ENCODE measurements at regions of chr11 and their contacts with region 1.

Region 1: DNA sequence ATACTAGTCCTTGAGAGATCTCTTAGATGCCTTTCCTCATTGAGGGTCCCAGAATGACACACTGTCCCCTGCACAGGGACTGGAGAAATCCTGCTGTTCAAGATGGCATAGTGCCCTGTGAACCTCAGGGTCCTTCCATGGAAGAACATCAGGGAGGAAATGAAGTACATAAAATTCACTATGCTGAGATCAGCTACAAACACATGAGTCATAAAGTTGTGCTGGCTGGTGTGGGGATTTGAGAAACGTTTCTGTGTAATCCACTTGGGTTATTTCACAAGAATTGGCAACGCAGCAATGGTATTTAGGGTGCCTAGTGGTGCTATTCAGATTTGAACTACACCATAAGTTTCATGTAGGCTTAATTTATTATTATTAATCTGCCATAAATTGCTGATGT is 174.4 kb downstream of the MAML2 start:
- DNase-seq: no peak
- H3K4me3 Mint-ChIP-seq: no peak overlapping the region
- H3K27ac Mint-ChIP-seq: peak overlapping the region; percentile 81
- H3K4me1 Mint-ChIP-seq: peaks cover 50% of the 10 kb centered on the region
- H3K27me3 Mint-ChIP-seq: no peaks in the 10 kb centered on the region

Region 2: DNA sequence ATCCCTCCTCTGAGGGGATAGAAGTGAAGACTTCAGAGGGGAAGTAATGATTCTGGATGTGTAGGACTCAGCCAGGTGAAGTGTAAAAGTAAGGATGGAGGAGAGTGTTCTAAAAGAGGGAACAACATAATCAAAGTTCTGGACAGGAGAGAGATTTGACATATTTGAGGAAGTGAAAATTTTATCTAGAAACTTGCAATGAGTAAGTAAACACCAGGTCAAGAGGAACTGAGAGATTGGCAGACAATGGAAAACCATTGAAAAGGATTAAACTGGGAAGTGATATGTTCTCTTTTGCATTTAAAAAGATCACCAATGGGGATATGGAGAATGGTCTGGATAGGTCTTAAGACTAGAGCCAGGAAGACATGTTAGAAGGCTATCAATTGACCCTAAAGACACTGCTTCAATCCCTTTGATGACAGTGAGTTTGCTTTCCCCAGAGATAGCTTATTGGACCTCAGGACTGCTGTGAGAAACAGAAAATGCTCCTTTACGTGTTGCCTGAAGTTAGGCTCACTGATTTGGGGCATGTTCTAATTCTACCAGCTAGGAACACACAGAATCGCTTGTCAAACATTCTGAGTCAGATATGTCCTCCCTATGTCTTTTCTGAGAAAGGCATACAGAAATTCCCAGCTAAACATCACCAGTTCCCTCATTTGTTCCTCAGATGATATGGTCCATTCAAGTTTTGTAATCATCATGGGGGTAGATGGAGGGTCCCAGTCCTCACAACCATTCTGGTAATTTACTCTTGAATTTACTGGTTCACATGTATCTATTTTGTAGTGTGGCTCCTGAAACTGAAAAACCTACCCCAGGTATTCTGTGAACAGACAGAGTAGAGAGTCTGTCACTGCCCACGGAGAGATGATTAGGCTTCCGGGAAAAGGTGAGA is 29.4 kb after region 1 on chr11:
- intact Hi-C with region 1: loop called (anchors 2 kb)
- DNase-seq: no peak
- H3K4me3 Mint-ChIP-seq: peak overlapping the region; percentile 17
- H3K27ac Mint-ChIP-seq: peak overlapping the region; percentile 17
- H3K4me1 Mint-ChIP-seq: peaks cover 62% of the 10 kb centered on the region
- H3K27me3 Mint-ChIP-seq: no peaks in the 10 kb centered on the region

Measured in activated CD4-positive, alpha-beta T cell treated with anti-CD3 and anti-CD28 coated beads, Interleukin-2, amount 10 ng/mL, durations not matched to agents 24 days and 14 days (primary cell).